Natural killer cell (primary cell): ENCODE measurements at regions of chr17 and their contacts with region 1.

Region 1: GRCh38 chr17:17663160-17664063 is 17.8 kb upstream of the RAI1 start:
- DNase-seq: peak; percentile 89 to 91
- ATAC-seq: peak; percentile 86 to 95 (median 89)
- H3K4me3 ChIP-seq: no peak overlapping the region
- H3K4me3 Mint-ChIP-seq: peak overlapping the region; percentile 3
- H3K27ac ChIP-seq: peak overlapping the region; percentile 65
- H3K27ac Mint-ChIP-seq: peak overlapping the region; percentile 82 to 83
- H3K4me1 ChIP-seq: peaks cover 22% of the 10 kb centered on the region
- H3K4me1 Mint-ChIP-seq: peaks cover 16 to 18% of the 10 kb centered on the region in 2 donors
- H3K27me3 ChIP-seq: no peaks in the 10 kb centered on the region
- H3K27me3 Mint-ChIP-seq: no peaks in the 10 kb centered on the region
- CTCF ChIP-seq: no peak

Region 2: GRCh38 chr17:17641621-17642409 is 21.6 kb before region 1 on chr17:
- intact Hi-C with region 1: no loop called
- DNase-seq: peak; percentile 74 to 92
- ATAC-seq: peak; percentile 87 to 98 (median 97)
- H3K4me3 ChIP-seq: no peak overlapping the region
- H3K4me3 Mint-ChIP-seq: no peak overlapping the region
- H3K27ac ChIP-seq: no peak overlapping the region
- H3K27ac Mint-ChIP-seq: no peak overlapping the region
- H3K4me1 ChIP-seq: peaks cover 13% of the 10 kb centered on the region
- H3K4me1 Mint-ChIP-seq: peaks cover 0 to 9% of the 10 kb centered on the region in 2 donors
- H3K27me3 ChIP-seq: no peaks in the 10 kb centered on the region
- H3K27me3 Mint-ChIP-seq: peaks cover 0 to 6% of the 10 kb centered on the region in 2 donors
- CTCF ChIP-seq: peak; percentile 78

Region 3: GRCh38 chr17:17693253-17694168 is 30.1 kb after region 1 on chr17:
- intact Hi-C with region 1: no loop called
- DNase-seq: peak in 1 of 2 donors; percentile 27
- ATAC-seq: peak in 1 of 3 donors; percentile 3
- H3K4me3 ChIP-seq: peak overlapping the region; percentile 47
- H3K4me3 Mint-ChIP-seq: peak overlapping the region; percentile 86
- H3K27ac ChIP-seq: peak overlapping the region; percentile 97
- H3K27ac Mint-ChIP-seq: peak overlapping the region; percentile 97 to 99
- H3K4me1 ChIP-seq: peaks cover 59% of the 10 kb centered on the region
- H3K4me1 Mint-ChIP-seq: peaks cover 49 to 61% of the 10 kb centered on the region in 2 donors
- H3K27me3 ChIP-seq: no peaks in the 10 kb centered on the region
- H3K27me3 Mint-ChIP-seq: no peaks in the 10 kb centered on the region
- CTCF ChIP-seq: no peak

Region 4: DNA sequence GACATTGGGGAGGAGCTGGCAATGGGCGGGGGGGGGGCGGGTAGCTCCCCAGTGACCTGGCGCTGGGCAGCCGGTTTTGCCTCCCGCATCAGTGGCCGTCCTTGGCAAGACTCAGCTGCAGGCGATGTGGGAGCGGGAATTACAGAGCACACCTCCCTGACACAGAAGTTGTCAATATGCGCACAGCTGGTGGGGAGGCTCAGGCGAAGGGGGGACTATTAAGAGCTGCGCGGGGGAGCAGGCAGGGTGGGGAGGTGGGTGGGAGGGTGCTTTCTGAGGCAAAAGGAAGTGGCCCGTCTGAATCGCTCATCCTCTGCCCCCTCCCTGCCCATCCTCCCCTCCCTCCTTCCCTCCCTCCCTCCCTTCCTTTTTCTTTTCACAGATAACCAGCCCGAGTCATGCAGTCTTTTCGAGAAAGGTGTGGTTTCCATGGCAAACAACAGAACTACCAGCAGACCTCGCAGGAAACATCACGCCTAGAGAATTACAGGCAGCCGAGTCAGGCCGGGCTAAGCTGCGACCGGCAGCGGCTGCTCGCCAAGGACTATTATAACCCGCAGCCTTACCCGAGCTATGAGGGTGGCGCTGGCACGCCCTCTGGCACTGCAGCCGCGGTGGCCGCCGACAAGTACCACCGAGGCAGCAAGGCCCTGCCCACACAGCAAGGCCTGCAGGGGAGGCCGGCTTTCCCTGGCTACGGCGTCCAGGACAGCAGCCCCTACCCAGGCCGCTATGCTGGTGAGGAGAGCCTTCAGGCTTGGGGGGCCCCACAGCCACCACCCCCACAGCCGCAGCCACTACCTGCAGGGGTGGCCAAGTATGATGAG is 129.4 kb after region 1 on chr17:
- intact Hi-C with region 1: loop called (anchors 1 kb)
- DNase-seq: peak; percentile 66 to 88
- ATAC-seq: peak; percentile 83 to 87 (median 84)
- H3K4me3 ChIP-seq: no peak overlapping the region
- H3K4me3 Mint-ChIP-seq: peak overlapping the region; percentile 83
- H3K27ac ChIP-seq: peak overlapping the region; percentile 80
- H3K27ac Mint-ChIP-seq: peak overlapping the region; percentile 82 to 93
- H3K4me1 ChIP-seq: peaks cover 30% of the 10 kb centered on the region
- H3K4me1 Mint-ChIP-seq: peaks cover 25 to 40% of the 10 kb centered on the region in 2 donors
- H3K27me3 ChIP-seq: no peaks in the 10 kb centered on the region
- H3K27me3 Mint-ChIP-seq: no peaks in the 10 kb centered on the region
- CTCF ChIP-seq: no peak

Region 5: GRCh38 chr17:17849845-17850373 is 186.5 kb after region 1 on chr17:
- intact Hi-C with region 1: loop called (anchors 1 kb)
- DNase-seq: peak; percentile 73 to 87
- ATAC-seq: peak; percentile 77 to 86 (median 77)
- H3K4me3 ChIP-seq: no peak overlapping the region
- H3K4me3 Mint-ChIP-seq: peak overlapping the region; percentile 72
- H3K27ac ChIP-seq: peak overlapping the region; percentile 81
- H3K27ac Mint-ChIP-seq: peak overlapping the region; percentile 94 to 96
- H3K4me1 ChIP-seq: peaks cover 57% of the 10 kb centered on the region
- H3K4me1 Mint-ChIP-seq: peaks cover 47 to 55% of the 10 kb centered on the region in 2 donors
- H3K27me3 ChIP-seq: no peaks in the 10 kb centered on the region
- H3K27me3 Mint-ChIP-seq: no peaks in the 10 kb centered on the region
- CTCF ChIP-seq: peak; percentile 19